Transverse colon (tissue), 4 donors: ENCODE measurements at regions of chr17 and their contacts with region 1.

Region 1: GRCh38 chr17:80805032-80805751 is 186.4 kb upstream of the CHMP6 start:
- DNase-seq: no peak
- H3K4me3 ChIP-seq: no peak overlapping the region
- H3K27ac ChIP-seq: no peak overlapping the region
- H3K4me1 ChIP-seq: no peaks in the 10 kb centered on the region
- H3K27me3 ChIP-seq: no peaks in the 10 kb centered on the region
- CTCF ChIP-seq: no peak
- EP300 ChIP-seq: no peak
- POLR2A ChIP-seq: no peak

Region 2: DNA sequence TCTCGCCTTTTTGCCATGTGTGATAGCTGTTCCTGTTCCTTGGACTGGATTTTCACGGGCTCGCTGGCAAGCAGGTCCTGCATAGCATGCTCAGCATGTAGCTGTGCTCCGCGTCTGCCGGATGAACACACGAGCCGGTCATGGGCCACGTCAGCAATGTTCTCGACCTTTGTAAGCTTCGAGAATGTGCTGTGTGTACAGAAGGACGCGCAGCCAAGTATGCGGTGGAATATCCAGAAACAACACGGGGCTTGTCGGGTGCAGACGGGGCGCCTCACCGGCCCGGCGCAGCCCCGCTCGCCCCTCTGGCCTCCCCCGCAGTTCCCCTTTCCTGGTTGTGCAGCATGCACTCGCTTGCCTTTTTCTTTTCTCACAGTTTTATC is 218.4 kb before region 1 on chr17:
- in situ Hi-C with region 1: no loop called
- intact Hi-C with region 1: loop called (anchors 10 kb)
- DNase-seq: no peak
- H3K4me3 ChIP-seq: no peak overlapping the region
- H3K27ac ChIP-seq: no peak overlapping the region
- H3K4me1 ChIP-seq: no peaks in the 10 kb centered on the region
- H3K27me3 ChIP-seq: no peaks in the 10 kb centered on the region
- CTCF ChIP-seq: no peak
- EP300 ChIP-seq: no peak
- POLR2A ChIP-seq: no peak